GM10248 (cell line): ENCODE measurements at regions of chr5 and their contacts with region 1.

Region 1: GRCh38 chr5:43236653-43237355 is 44.8 kb downstream of the NIM1K start:
- DNase-seq: no peak
- CTCF ChIP-seq: no peak

Region 2: GRCh38 chr5:43225649-43226245 is 11.1 kb before region 1 on chr5:
- CTCF ChIA-PET with region 1: interaction called, 15 read pairs
- POLR2A ChIA-PET with region 1: no interaction called
- DNase-seq: no peak
- CTCF ChIP-seq: no peak

Region 3: DNA sequence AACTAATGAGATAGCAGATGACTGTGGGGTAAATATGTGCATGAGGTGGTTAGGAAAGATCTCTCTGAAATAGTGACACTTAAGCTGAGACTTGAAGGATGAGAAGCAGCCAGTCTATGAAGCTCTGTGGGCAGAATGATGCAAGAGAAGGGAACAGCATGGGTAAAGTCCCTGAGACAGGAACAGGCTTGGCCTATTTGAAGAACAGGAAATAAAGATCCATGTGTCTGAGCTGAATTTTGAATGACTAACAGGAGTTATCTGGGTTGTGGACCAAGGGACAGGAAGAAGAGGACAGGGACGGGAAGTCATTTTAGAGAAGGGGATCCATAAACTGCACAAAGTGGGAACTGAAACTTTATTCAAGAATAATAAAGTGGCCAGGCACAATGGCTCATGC is 102.1 kb after region 1 on chr5:
- CTCF ChIA-PET with region 1: no interaction called
- POLR2A ChIA-PET with region 1: no interaction called
- DNase-seq: no peak
- CTCF ChIP-seq: no peak